CD8-positive, alpha-beta T cell (primary cell): ENCODE measurements at regions of chr2 and their contacts with region 1.

Region 1: GRCh38 chr2:8081130-8081529 is 600.7 kb upstream of the ID2 start:
- DNase-seq: no peak
- ATAC-seq: no peak
- H3K4me3 ChIP-seq: no peak overlapping the region
- H3K4me3 Mint-ChIP-seq: no peak overlapping the region
- H3K27ac ChIP-seq: no peak overlapping the region
- H3K27ac Mint-ChIP-seq: no peak overlapping the region
- H3K4me1 ChIP-seq: no peaks in the 10 kb centered on the region
- H3K4me1 Mint-ChIP-seq: peaks cover 7% of the 10 kb centered on the region
- H3K27me3 ChIP-seq: no peaks in the 10 kb centered on the region
- H3K27me3 Mint-ChIP-seq: no peaks in the 10 kb centered on the region
- CTCF ChIP-seq: no peak

Region 2: GRCh38 chr2:8103083-8103708 is 22.1 kb after region 1 on chr2:
- CTCF ChIA-PET with region 1: no interaction called
- POLR2A ChIA-PET with region 1: no interaction called
- intact Hi-C with region 1: loop called in 1 of 2 experiments (anchors 1 kb)
- DNase-seq: no peak
- ATAC-seq: no peak
- H3K4me3 ChIP-seq: no peak overlapping the region
- H3K4me3 Mint-ChIP-seq: no peak overlapping the region
- H3K27ac ChIP-seq: no peak overlapping the region
- H3K27ac Mint-ChIP-seq: no peak overlapping the region
- H3K4me1 ChIP-seq: no peaks in the 10 kb centered on the region
- H3K4me1 Mint-ChIP-seq: no peaks in the 10 kb centered on the region
- H3K27me3 ChIP-seq: no peaks in the 10 kb centered on the region
- H3K27me3 Mint-ChIP-seq: no peaks in the 10 kb centered on the region
- CTCF ChIP-seq: no peak

Region 3: GRCh38 chr2:8152392-8153257 is 71.5 kb after region 1 on chr2:
- CTCF ChIA-PET with region 1: no interaction called
- POLR2A ChIA-PET with region 1: no interaction called
- intact Hi-C with region 1: no loop called
- DNase-seq: no peak
- ATAC-seq: no peak
- H3K4me3 ChIP-seq: no peak overlapping the region
- H3K4me3 Mint-ChIP-seq: no peak overlapping the region
- H3K27ac ChIP-seq: no peak overlapping the region
- H3K27ac Mint-ChIP-seq: no peak overlapping the region
- H3K4me1 ChIP-seq: no peaks in the 10 kb centered on the region
- H3K4me1 Mint-ChIP-seq: peaks cover 12% of the 10 kb centered on the region
- H3K27me3 ChIP-seq: no peaks in the 10 kb centered on the region
- H3K27me3 Mint-ChIP-seq: no peaks in the 10 kb centered on the region
- CTCF ChIP-seq: no peak

Region 4: GRCh38 chr2:8178911-8179310 is 97.8 kb after region 1 on chr2:
- CTCF ChIA-PET with region 1: no interaction called
- POLR2A ChIA-PET with region 1: no interaction called
- intact Hi-C with region 1: no loop called
- DNase-seq: no peak
- ATAC-seq: no peak
- H3K4me3 ChIP-seq: no peak overlapping the region
- H3K4me3 Mint-ChIP-seq: no peak overlapping the region
- H3K27ac ChIP-seq: no peak overlapping the region
- H3K27ac Mint-ChIP-seq: no peak overlapping the region
- H3K4me1 ChIP-seq: no peaks in the 10 kb centered on the region
- H3K4me1 Mint-ChIP-seq: no peaks in the 10 kb centered on the region
- H3K27me3 ChIP-seq: no peaks in the 10 kb centered on the region
- H3K27me3 Mint-ChIP-seq: no peaks in the 10 kb centered on the region
- CTCF ChIP-seq: no peak